ENCODE measurements at regions of chr2 and their contacts with region 1.

Region 1: DNA sequence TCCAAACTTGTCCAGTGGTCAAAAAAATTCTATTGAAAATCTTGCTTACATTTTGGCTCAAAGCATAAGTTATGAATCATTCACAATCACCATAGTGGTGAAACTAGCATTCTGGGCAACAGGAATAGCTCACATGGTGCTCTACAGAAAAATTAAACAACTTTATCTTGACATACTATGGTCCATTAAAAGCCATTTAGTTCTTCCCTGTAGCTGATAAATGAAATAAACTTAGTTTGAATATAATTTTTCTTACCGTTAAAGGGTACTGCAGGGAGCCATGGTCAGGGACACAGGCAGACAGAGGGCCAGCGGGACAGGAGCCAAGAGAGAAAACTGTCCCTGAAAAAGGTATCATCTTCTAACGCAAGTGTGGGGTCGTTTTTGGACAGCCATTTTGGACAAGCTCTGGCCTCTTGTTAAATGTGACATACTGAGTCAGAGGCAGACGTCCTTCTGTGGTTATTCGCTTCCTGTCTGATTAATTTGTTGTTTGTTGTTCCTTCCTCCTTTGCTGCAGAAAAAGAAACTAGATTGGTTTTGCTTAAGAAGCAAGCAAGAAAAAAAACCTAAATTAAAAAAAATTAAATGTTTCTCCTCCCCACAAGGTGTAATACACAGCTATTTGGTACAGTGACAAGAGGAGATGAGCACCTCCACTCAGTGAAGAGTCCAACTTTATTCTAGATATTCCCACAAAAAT is at the start of gene WIPF1:
- DNase-seq: peak; percentile 54
- H3K4me3 Mint-ChIP-seq: no peak within 1 kb of the TSS
- H3K27ac Mint-ChIP-seq: peak within 1 kb of the TSS; percentile 46
- H3K4me1 Mint-ChIP-seq: peaks cover 26% of the 10 kb centered on the region
- H3K27me3 Mint-ChIP-seq: no peaks in the 10 kb centered on the region
- CTCF ChIP-seq: no peak
- total RNA-seq, gene WIPF1: 6.0 and 6.2 TPM in 2 replicates

Region 2: GRCh38 chr2:174614287-174614686 is 16.8 kb after region 1 on chr2:
- CTCF ChIA-PET with region 1: interaction called, 5 read pairs
- POLR2A ChIA-PET with region 1: interaction called, 10 read pairs
- intact Hi-C with region 1: no loop called
- DNase-seq: peak; percentile 80
- H3K4me3 Mint-ChIP-seq: peak overlapping the region; percentile 43
- H3K27ac Mint-ChIP-seq: peak overlapping the region; percentile 90
- H3K4me1 Mint-ChIP-seq: peaks cover 34% of the 10 kb centered on the region
- H3K27me3 Mint-ChIP-seq: no peaks in the 10 kb centered on the region
- CTCF ChIP-seq: no peak

Measured in MCF 10A (cell line).